Gastrocnemius medialis (tissue), 4 donors: ENCODE measurements at regions of chr1 and their contacts with region 1.

Region 1: DNA sequence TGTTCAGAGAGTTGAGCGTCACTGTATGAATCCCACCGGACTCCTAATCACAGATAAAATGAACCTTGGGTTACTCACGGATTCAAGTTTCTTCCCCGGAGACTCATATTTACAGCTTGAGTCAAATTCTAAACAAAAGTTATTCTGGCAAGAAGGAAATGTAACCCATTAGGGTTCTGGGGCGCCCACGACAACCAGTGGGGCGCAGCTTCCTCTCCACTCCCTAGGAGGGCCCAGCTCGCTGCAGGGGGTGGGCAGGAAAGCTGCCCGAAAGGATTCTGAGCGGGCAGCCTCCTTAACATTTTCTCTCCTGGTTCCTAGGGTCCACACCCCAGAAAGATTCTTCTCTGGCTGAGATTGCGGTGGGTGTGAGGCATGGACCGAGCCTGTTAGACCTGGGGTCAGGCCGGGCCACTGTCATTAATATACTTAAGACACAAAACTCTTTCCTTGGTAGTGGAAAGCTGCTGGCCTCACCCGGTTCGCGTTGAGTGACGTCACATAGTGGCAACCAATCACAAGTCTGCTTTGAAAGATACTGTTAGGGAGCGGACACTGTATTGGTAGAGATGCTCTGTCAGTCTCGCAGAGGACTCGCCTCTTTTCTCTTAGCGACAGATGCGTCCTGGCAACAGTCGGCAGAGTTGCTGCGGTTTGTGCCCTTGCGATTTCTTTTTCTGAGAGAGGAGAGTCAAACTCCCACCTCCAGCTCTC is 13.6 kb upstream of the MCOLN3 start:
- DNase-seq: peak; percentile 87 to 90
- ATAC-seq: peak; percentile 100
- H3K4me3 ChIP-seq: peak overlapping the region; percentile 54 to 65 (median 58)
- H3K27ac ChIP-seq: peak overlapping the region in 3 of 4 donors; percentile 39 to 42 (median 40)
- H3K4me1 ChIP-seq: peaks cover 0 to 3% of the 10 kb centered on the region in 2 donors
- H3K27me3 ChIP-seq: no peaks in the 10 kb centered on the region
- CTCF ChIP-seq: no peak
- POLR2A ChIP-seq: no peak

Region 2: DNA sequence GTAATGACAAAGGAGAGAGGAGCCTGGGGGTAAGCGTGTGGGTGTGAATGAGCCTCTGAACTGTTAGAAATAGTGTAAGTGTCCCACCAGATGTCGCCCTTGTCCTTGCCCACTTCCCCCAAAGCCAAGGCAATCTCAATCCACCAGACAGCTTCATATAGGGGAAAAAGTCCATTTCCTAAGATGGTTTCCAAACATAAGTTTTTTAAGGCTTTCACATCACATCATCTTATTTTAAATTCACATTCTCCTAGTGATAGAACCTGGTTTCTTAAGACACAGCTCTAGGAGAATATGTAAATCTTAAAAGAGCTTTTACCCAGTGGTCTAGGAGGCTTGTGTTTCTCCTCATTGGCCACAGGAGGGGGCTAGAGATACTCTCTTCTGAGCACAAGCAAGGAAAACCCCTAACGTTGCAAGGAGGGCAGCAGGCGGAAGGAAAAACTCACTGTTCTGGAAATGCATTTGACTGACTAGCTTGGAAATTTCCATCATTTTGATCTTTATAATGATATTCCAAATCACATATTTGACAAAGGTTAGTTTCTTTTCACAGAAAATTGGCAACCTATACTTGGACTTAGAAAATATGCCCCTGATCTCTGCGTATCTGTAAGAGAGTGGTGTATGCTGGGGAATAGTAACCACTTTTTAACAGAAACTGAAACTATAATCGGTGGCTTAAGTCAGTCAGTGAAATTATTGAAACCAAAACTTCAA is 116.9 kb before region 1 on chr1:
- in situ Hi-C with region 1: no loop called
- intact Hi-C with region 1: loop called (anchors 10 kb)
- DNase-seq: peak; percentile 44 to 52
- ATAC-seq: peak; percentile 98 to 99
- H3K4me3 ChIP-seq: peak overlapping the region; percentile 38 to 58 (median 52)
- H3K27ac ChIP-seq: peak overlapping the region in 3 of 4 donors; percentile 28 to 47 (median 35)
- H3K4me1 ChIP-seq: peaks cover 0 to 6% of the 10 kb centered on the region in 2 donors
- H3K27me3 ChIP-seq: no peaks in the 10 kb centered on the region
- CTCF ChIP-seq: peak; percentile 68 to 90 (median 85)
- POLR2A ChIP-seq: no peak

Region 3: GRCh38 chr1:85220756-85221201 is 158.9 kb after region 1 on chr1:
- in situ Hi-C with region 1: no loop called
- intact Hi-C with region 1: no loop called
- DNase-seq: no peak
- ATAC-seq: no peak
- H3K4me3 ChIP-seq: no peak overlapping the region
- H3K27ac ChIP-seq: no peak overlapping the region
- H3K4me1 ChIP-seq: peaks cover 7 to 9% of the 10 kb centered on the region in 2 donors
- H3K27me3 ChIP-seq: no peaks in the 10 kb centered on the region
- CTCF ChIP-seq: no peak
- POLR2A ChIP-seq: no peak

Region 4: GRCh38 chr1:85463731-85464496 is 402.0 kb after region 1 on chr1:
- in situ Hi-C with region 1: no loop called
- intact Hi-C with region 1: no loop called
- DNase-seq: no peak
- ATAC-seq: peak in 1 of 2 donors; percentile 32
- H3K4me3 ChIP-seq: peak overlapping the region; percentile 58 to 88 (median 64)
- H3K27ac ChIP-seq: peak overlapping the region; percentile 29 to 69 (median 58)
- H3K4me1 ChIP-seq: peaks cover 4 to 6% of the 10 kb centered on the region in 2 donors
- H3K27me3 ChIP-seq: no peaks in the 10 kb centered on the region
- CTCF ChIP-seq: peak in 1 of 5 experiments; percentile 14
- POLR2A ChIP-seq: no peak